ENCODE measurements at regions of chr16 and their contacts with region 1.

Region 1: GRCh38 chr16:22054847-22055590 is 37.3 kb upstream of the VWA3A start:
- DNase-seq: peak; percentile 66
- H3K4me3 Mint-ChIP-seq: peak overlapping the region; percentile 43
- H3K27ac Mint-ChIP-seq: peak overlapping the region; percentile 85
- H3K4me1 Mint-ChIP-seq: peaks cover 27% of the 10 kb centered on the region
- H3K27me3 Mint-ChIP-seq: no peaks in the 10 kb centered on the region

Region 2: DNA sequence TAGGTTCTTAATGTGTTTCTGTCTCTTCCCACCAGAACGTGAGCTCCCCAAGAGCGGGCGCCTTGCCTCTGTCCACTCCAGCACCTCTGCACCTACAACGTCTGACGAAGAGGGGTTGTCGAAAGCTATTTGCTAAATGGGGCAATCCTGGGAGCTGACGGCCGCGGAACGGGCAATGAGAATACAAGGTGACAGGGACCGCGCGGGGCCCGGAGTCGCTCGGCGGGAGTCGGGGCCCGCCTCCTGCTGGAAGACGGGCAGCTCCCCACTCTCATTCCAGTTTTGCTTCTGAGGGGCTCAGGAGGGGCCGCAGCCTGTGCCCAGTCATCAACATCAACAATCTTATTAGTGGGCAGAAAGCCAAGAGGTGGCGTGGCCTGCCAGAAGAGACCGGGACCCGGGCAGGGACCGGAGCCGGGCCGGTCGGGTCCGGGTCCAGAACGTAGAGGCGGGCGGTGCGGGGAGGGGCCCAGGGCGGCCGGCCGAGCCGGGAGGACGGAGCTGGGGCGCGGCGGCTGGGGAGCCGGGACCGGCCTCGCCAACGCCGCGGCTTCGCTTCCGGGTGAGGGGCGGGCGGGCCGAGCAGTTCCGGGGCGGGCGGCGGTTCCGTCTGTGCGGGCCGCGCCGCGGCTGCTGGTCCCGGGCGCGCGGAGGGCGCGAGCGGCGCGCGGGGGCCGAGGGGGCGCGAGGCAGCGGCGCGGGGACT is 47.4 kb before region 1 on chr16 and contains the start of gene MOSMO:
- intact Hi-C with region 1: loop called (anchors 5 kb)
- DNase-seq: peak; percentile 91
- H3K4me3 Mint-ChIP-seq: peak within 1 kb of the TSS; percentile 89
- H3K27ac Mint-ChIP-seq: peak within 1 kb of the TSS; percentile 89
- H3K4me1 Mint-ChIP-seq: peaks cover 25% of the 10 kb centered on the region
- H3K27me3 Mint-ChIP-seq: peaks cover 4% of the 10 kb centered on the region
- total RNA-seq, gene MOSMO: 13.6 and 14.4 TPM in 2 replicates

Measured in activated CD4-positive, alpha-beta T cell treated with anti-CD3 and anti-CD28 coated beads, Interleukin-2, amount 10 ng/mL, durations not matched to agents 24 days and 14 days (primary cell).